GM18951 (cell line): ENCODE measurements at regions of chr2 and their contacts with region 1.

Region 1: GRCh38 chr2:112821142-112821541 is 15.4 kb downstream of the IL1B start:
- POLR2A ChIP-seq: no peak

Region 2: GRCh38 chr2:112877423-112877822 is 56.3 kb after region 1 on chr2:
- in situ Hi-C with region 1: loop called (anchors 10 kb)
- POLR2A ChIP-seq: no peak

Region 3: DNA sequence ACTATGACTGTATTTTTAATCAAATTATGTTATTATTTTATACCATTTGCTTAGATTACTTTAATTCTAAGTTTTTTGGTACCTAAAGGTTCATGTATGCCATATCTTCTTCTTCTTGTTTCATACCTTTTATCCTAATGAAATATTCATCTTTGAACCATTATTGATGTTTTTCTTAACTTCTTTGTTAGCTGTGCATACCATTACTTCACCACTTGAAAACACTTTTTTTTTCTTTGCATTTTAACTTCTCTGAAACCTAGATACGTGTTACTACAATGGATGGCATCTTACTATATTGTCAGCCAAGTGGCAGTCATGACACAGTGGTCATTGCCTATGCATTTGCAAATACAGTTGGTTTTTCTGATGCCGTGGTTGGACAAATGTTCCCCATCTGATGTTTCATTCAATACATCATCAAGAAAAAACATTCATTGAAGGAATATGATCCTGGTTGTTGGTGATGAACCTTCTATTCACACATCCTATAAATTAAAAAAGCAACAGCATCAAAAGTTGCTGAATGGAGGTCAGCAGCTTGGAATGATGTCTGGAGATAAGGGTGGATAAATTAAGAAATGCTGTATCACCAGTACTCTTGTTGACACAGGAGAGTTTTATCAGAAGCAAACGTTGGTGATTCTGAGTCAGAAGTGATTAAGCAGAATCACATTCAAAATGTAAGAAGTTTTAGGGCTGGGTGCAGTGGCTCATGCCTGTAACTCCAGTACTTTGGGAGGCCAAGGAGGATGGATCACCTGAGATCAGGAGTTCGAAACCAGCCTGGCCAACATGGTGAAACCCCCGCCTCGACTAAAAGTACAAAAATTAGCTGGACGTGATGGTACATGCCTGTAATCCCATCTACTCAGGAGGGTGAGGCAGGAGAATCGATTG is 191.5 kb after region 1 on chr2:
- in situ Hi-C with region 1: no loop called
- POLR2A ChIP-seq: no peak